Endothelial cell of umbilical vein (primary cell): ENCODE measurements at regions of chr4 and their contacts with region 1.

Region 1: DNA sequence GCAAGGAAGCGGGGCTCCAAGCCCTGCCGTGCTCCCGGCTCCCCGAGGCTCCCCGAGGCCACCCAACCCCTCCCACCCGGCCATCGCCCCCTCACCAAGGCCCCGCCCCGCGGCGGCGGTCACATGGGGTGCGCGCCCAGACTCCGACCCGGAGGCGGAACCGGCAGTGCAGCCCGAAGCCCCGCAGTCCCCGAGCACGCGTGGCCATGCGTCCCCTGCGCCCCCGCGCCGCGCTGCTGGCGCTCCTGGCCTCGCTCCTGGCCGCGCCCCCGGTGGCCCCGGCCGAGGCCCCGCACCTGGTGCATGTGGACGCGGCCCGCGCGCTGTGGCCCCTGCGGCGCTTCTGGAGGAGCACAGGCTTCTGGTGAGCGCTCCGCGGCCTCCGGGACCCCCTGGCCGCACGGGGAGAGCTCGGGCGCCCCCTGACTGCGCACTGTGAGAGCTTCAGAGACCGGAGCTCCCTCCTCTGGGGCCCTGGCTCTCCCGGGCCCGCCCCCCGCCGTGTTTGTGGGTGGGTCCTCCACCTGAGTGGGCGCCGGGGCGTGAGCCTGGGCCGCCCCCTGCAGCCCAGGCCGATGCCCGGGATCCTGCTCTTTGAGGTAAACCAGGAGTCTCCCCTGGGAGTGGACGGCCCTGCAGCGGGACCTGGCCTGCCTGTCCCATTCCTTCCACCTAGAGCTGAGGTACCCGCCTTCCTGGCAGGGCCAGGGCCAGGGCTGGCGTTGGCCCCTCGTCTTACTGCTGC is at the start of gene IDUA:
- DNase-seq: peak; percentile 75
- H3K4me3 ChIP-seq: peak within 1 kb of the TSS; percentile 67 to 89 (median 74)
- H3K27ac ChIP-seq: peak within 1 kb of the TSS; percentile 25
- H3K4me1 ChIP-seq: peaks cover 15% of the 10 kb centered on the region
- H3K27me3 ChIP-seq: no peaks in the 10 kb centered on the region
- CTCF ChIP-seq: peak; percentile 55 to 81
- POLR2A ChIP-seq: peak; percentile 55
- total RNA-seq, gene IDUA: 29.2 and 34.1 TPM in 2 replicates

Region 2: GRCh38 chr4:742742-743311 is 244.2 kb before region 1 on chr4:
- CTCF ChIA-PET with region 1: interaction called, 35 read pairs
- POLR2A ChIA-PET with region 1: no interaction called
- dilution Hi-C with region 1: no loop called
- intact Hi-C with region 1: loop called (anchors 5 kb)
- DNase-seq: peak; percentile 52
- H3K4me3 ChIP-seq: no peak overlapping the region
- H3K27ac ChIP-seq: no peak overlapping the region
- H3K4me1 ChIP-seq: no peaks in the 10 kb centered on the region
- H3K27me3 ChIP-seq: no peaks in the 10 kb centered on the region
- CTCF ChIP-seq: peak; percentile 77 to 93
- POLR2A ChIP-seq: no peak

Region 3: GRCh38 chr4:786861-787300 is 200.2 kb before region 1 on chr4:
- CTCF ChIA-PET with region 1: interaction called, 5 read pairs
- POLR2A ChIA-PET with region 1: no interaction called
- dilution Hi-C with region 1: no loop called
- intact Hi-C with region 1: loop called (anchors 1 kb)
- DNase-seq: peak; percentile 35
- H3K4me3 ChIP-seq: no peak overlapping the region
- H3K27ac ChIP-seq: no peak overlapping the region
- H3K4me1 ChIP-seq: peaks cover 9% of the 10 kb centered on the region
- H3K27me3 ChIP-seq: peaks cover 1 to 4% of the 10 kb centered on the region in 2 experiments
- CTCF ChIP-seq: peak; percentile 55 to 83
- POLR2A ChIP-seq: no peak

Region 4: DNA sequence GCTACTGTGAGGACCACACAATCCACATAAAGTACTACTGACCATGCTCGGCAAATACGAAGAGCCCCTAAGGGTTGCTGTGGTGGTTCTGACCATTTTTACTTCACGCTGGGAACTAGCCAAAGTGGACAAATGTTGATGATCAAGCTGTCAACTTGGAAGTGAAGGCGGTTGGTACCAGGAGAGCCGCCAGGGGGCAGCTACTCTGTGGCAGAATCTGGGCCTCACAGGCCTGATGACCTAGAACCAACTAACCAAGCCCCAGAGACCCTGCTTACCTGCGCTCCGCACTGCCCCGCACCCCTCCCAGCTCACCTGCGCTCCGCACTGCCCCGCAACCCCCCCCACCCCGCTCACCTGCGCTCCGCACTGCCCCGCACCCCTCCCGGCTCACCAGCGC is 60.5 kb before region 1 on chr4:
- CTCF ChIA-PET with region 1: interaction called, 15 read pairs
- POLR2A ChIA-PET with region 1: no interaction called
- dilution Hi-C with region 1: no loop called
- intact Hi-C with region 1: loop called (anchors 1 kb)
- DNase-seq: no peak
- H3K4me3 ChIP-seq: no peak overlapping the region
- H3K27ac ChIP-seq: no peak overlapping the region
- H3K4me1 ChIP-seq: peaks cover 6% of the 10 kb centered on the region
- H3K27me3 ChIP-seq: no peaks in the 10 kb centered on the region
- CTCF ChIP-seq: peak; percentile 24 to 43
- POLR2A ChIP-seq: no peak

Region 5: DNA sequence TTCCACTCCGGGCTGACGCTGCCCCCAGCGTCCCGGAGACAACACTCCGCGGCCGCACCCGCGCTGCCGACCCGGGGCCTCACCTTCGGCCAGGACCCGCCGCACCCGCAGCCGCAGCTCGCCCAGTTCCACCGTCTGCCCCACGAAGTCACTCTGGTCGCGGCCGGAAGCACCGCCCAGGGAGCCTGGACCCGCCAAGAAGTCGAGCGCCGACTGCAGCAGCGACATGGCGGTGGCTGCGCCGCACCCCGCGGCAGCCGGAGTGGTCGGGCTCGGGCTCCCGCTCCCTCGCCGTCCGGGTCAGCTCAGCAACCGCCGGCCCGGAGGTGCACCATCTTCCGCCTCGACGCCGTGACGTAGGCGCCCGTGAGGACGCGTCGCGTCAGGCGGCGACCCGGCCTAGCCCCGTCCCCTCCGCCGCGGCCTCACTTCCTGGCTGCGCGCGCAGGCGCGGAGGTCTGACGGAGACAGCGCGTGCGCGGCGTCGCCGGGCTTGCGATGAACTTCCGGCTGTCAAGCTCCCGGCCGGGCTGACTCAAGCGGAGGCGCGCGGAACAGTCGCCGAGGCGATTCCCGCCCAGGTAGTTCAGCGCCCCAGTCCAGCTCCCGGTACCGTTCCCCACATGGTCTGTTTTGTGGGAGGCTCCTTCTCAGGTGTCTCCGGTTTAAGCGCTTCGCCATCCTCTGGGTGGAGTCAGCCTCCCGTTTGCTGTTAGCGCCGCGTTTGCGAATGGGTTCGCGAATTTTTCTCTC is 54.9 kb before region 1 on chr4 and contains the starts of genes GAK and TMEM175:
- CTCF ChIA-PET with region 1: interaction called, 15 read pairs
- POLR2A ChIA-PET with region 1: no interaction called
- dilution Hi-C with region 1: no loop called
- intact Hi-C with region 1: loop called (anchors 2 kb)
- DNase-seq: peak; percentile 98
- H3K4me3 ChIP-seq: peak within 1 kb of the TSS; percentile 82 to 83 (median 82)
- H3K27ac ChIP-seq: peak within 1 kb of the TSS; percentile 71
- H3K4me1 ChIP-seq: peaks cover 9% of the 10 kb centered on the region
- H3K27me3 ChIP-seq: no peaks in the 10 kb centered on the region
- CTCF ChIP-seq: no peak
- POLR2A ChIP-seq: peak; percentile 92
- total RNA-seq, gene GAK: 109 and 110 TPM in 2 replicates
- total RNA-seq, gene TMEM175: 16.5 and 21.9 TPM in 2 replicates

Region 6: GRCh38 chr4:973431-974397 is 13.3 kb before region 1 on chr4 and contains the start of gene DGKQ:
- CTCF ChIA-PET with region 1: interaction called, 8 read pairs
- POLR2A ChIA-PET with region 1: no interaction called
- dilution Hi-C with region 1: no loop called
- intact Hi-C with region 1: loop called (anchors 2 kb)
- DNase-seq: peak; percentile 82
- H3K4me3 ChIP-seq: peak within 1 kb of the TSS; percentile 62 to 95 (median 87)
- H3K27ac ChIP-seq: no peak within 1 kb of the TSS
- H3K4me1 ChIP-seq: peaks cover 11% of the 10 kb centered on the region
- H3K27me3 ChIP-seq: no peaks in the 10 kb centered on the region
- CTCF ChIP-seq: no peak
- POLR2A ChIP-seq: no peak
- total RNA-seq, gene DGKQ: 20.2 and 20.4 TPM in 2 replicates

Region 7: DNA sequence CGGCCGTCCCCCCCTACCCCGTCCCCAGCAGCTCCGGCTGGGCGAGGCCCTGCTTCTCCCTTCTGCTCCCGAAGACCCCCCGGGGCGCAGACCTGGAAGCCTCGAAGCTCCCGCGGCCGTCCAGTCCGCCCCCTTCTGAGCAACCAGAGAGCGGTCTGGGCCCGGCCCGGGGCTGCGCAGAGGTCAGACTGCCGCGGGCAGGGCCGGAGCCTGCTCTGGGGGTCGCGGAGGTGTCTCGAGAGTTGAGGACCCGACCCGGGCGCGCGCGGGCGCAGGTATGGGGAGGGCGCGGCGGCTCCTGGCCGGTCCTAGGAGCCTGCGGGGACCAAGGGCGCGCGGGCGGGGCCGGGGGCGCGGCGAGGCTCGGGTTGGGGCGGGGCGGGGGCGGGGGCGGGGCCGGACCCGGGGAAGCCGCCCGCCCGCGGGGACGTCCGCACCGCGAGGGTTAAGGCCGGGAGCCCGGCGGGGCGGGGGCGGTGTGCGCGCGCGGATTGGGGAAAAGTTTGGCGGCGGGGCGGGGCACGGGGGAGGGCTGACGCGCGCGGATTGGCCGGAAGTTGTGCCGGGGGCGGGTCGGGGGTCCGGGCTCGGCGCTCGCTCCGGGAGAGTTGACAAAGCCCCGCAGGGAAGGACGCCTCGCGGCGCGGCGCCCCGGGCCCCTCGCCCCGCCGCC is 24.1 kb after region 1 on chr4 and contains the start of gene FGFRL1:
- CTCF ChIA-PET with region 1: interaction called, 13 read pairs
- POLR2A ChIA-PET with region 1: no interaction called
- dilution Hi-C with region 1: no loop called
- intact Hi-C with region 1: no loop called
- DNase-seq: peak; percentile 76
- H3K4me3 ChIP-seq: peak within 1 kb of the TSS; percentile 52 to 85 (median 66)
- H3K27ac ChIP-seq: no peak within 1 kb of the TSS
- H3K4me1 ChIP-seq: peaks cover 9% of the 10 kb centered on the region
- H3K27me3 ChIP-seq: peaks cover 13 to 16% of the 10 kb centered on the region in 2 experiments
- CTCF ChIP-seq: no peak
- POLR2A ChIP-seq: no peak
- total RNA-seq, gene FGFRL1: 33.3 and 34.8 TPM in 2 replicates